PC-9 (cell line): ENCODE measurements at regions of chr5 and their contacts with region 1.

Region 1: GRCh38 chr5:132426525-132427138 is 57.1 kb downstream of the SLC22A5 start:
- DNase-seq: peak; percentile 78 to 93
- H3K4me3 ChIP-seq: peak overlapping the region; percentile 11; the same call in 1 of the 2 replicates
- H3K27ac ChIP-seq: peak overlapping the region; percentile 87
- H3K4me1 ChIP-seq: peaks cover 79% of the 10 kb centered on the region
- H3K27me3 ChIP-seq: no peaks in the 10 kb centered on the region
- CTCF ChIP-seq: peak; percentile 44; the same call in 1 of the 2 replicates

Region 2: GRCh38 chr5:132410451-132411381 is 15.9 kb before region 1 on chr5:
- CTCF ChIA-PET with region 1: interaction called, 17 read pairs
- POLR2A ChIA-PET with region 1: interaction called, 9 read pairs
- intact Hi-C with region 1: loop called (anchors 1 kb)
- DNase-seq: peak; percentile 64 to 80
- H3K4me3 ChIP-seq: peak overlapping the region; percentile 79
- H3K27ac ChIP-seq: peak overlapping the region; percentile 92
- H3K4me1 ChIP-seq: peaks cover 59% of the 10 kb centered on the region
- H3K27me3 ChIP-seq: no peaks in the 10 kb centered on the region
- CTCF ChIP-seq: peak; percentile 73

Region 3: GRCh38 chr5:132446669-132447068 is 20.0 kb after region 1 on chr5:
- CTCF ChIA-PET with region 1: interaction called, 5 read pairs
- POLR2A ChIA-PET with region 1: interaction called, 10 read pairs
- intact Hi-C with region 1: loop called (anchors 1 kb)
- DNase-seq: peak; percentile 62 to 73
- H3K4me3 ChIP-seq: no peak overlapping the region
- H3K27ac ChIP-seq: peak overlapping the region; percentile 88
- H3K4me1 ChIP-seq: peaks cover 55% of the 10 kb centered on the region
- H3K27me3 ChIP-seq: no peaks in the 10 kb centered on the region
- CTCF ChIP-seq: no peak

Region 4: GRCh38 chr5:132455614-132456115 is 29.0 kb after region 1 on chr5:
- CTCF ChIA-PET with region 1: interaction called, 5 read pairs
- POLR2A ChIA-PET with region 1: interaction called, 10 read pairs
- intact Hi-C with region 1: no loop called
- DNase-seq: no peak
- H3K4me3 ChIP-seq: no peak overlapping the region
- H3K27ac ChIP-seq: no peak overlapping the region
- H3K4me1 ChIP-seq: peaks cover 42% of the 10 kb centered on the region
- H3K27me3 ChIP-seq: no peaks in the 10 kb centered on the region
- CTCF ChIP-seq: no peak

Region 5: GRCh38 chr5:132466433-132467286 is 40.0 kb after region 1 on chr5:
- CTCF ChIA-PET with region 1: interaction called, 7 read pairs
- POLR2A ChIA-PET with region 1: interaction called, 7 read pairs
- intact Hi-C with region 1: loop called (anchors 1 kb)
- DNase-seq: peak in 1 of 2 experiments; percentile 59
- H3K4me3 ChIP-seq: no peak overlapping the region
- H3K27ac ChIP-seq: no peak overlapping the region
- H3K4me1 ChIP-seq: peaks cover 29% of the 10 kb centered on the region
- H3K27me3 ChIP-seq: no peaks in the 10 kb centered on the region
- CTCF ChIP-seq: no peak